ENCODE measurements at regions of chr11 and their contacts with region 1.

Region 1: DNA sequence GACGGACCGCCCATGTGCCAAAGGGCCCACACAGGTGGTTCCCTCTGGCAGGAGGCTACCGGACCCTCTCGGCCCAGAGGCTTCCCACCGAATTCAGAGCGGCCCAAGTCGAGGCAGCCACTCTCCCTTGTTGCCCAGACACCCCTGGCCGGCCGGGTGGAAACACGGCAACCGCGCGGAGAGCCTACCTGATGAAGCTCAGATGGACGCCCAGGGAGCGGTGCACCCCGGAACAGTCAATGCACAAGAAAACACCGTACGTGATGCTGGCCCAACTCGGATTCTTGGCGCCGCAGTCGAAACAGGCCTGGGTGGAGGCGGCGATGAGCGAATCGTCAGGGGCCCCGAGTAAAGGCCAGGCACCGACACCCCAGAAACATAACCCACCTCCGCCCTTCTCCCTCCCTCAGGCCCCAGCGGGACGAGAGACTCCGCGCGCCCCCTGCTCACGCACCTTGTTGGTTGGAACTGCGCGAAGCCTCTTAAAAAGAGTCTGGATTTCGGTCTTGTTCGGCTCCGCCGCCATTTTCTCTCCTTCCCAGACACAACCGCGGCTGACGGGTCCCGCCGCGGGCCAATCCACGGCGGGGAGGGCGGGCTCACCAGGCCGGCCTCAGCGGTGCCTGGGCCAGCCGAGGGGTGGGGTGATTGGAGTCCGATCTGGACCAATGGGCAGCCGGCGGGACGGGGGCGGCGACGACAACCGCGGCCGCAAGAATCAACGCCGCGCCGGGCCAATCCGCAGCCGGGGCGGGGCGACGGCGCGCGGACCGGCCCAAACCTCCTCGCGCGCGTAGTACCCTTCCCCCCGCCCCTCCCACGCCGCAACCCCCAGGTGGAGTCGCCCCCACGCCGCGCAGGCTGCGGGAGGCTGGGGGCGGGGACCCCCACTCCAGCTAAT is at the start of gene ARFGAP2:
- DNase-seq: peak; percentile 92 to 98 (median 96)
- ATAC-seq: peak; percentile 94
- H3K4me3 ChIP-seq: peak within 1 kb of the TSS; percentile 97
- H3K4me3 Mint-ChIP-seq: peak within 1 kb of the TSS; percentile 92 to 99 (median 98)
- H3K27ac ChIP-seq: peak within 1 kb of the TSS; percentile 97
- H3K27ac Mint-ChIP-seq: peak within 1 kb of the TSS; percentile 97 to 100 (median 99)
- H3K4me1 ChIP-seq: peaks cover 19 to 31% of the 10 kb centered on the region in 2 donors
- H3K4me1 Mint-ChIP-seq: peaks cover 19 to 60% (median 45%) of the 10 kb centered on the region in 7 donors
- H3K27me3 ChIP-seq: no peaks in the 10 kb centered on the region
- H3K27me3 Mint-ChIP-seq: no peaks in the 10 kb centered on the region
- total RNA-seq, gene ARFGAP2: 107 to 220 (median 155) TPM

Region 2: DNA sequence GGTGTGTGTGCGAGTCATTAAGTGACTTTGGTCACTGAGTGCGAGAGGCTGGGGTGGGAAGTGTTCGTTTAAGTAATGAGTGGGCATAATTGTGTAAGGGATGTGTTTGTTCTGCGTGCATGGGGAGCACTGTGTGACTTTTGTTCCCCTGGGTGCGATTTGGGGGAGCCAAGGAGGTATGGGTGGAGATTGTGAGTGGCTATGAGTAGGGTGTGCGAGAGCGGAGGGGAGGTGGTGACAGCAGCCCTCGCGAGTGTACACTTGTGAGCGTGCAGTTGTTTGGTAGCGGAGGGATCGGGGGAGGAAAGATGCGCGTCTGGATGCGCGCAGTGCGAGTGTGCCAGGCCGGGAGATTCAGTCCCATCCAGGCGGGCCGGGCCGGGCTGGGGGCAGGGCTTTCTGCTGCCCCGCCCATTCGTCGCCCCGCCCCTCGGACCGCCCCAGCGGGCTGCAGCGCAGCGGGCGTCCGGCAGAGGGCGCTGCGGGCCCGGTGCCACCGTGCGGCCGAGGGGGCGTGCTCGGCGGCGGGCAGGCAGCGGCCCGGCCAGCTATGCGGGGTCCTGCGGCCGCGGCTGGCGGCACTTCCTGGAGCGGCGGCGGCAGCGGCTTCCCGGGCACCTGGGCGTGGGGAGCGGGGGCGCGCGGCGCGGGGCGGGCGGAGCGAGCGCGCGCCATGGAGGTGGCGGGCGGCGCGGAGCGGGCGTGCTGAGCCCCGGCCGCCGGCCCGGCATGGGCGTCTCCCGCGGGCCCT is 829.5 kb before region 1 on chr11 and contains the start of gene DGKZ:
- CTCF ChIA-PET with region 1: no interaction called
- POLR2A ChIA-PET with region 1: no interaction called
- intact Hi-C with region 1: loop called in 1 of 2 experiments (anchors 5 kb)
- DNase-seq: peak; percentile 85 to 100 (median 96)
- ATAC-seq: peak; percentile 92
- H3K4me3 ChIP-seq: peak within 1 kb of the TSS; percentile 91
- H3K4me3 Mint-ChIP-seq: peak within 1 kb of the TSS; percentile 93 to 97 (median 95)
- H3K27ac ChIP-seq: peak within 1 kb of the TSS; percentile 83
- H3K27ac Mint-ChIP-seq: peak within 1 kb of the TSS; percentile 89 to 98 (median 94)
- H3K4me1 ChIP-seq: peaks cover 46 to 79% of the 10 kb centered on the region in 2 donors
- H3K4me1 Mint-ChIP-seq: peaks cover 61 to 85% (median 75%) of the 10 kb centered on the region in 7 donors
- H3K27me3 ChIP-seq: no peaks in the 10 kb centered on the region
- H3K27me3 Mint-ChIP-seq: peaks cover 0 to 3% (median 0%) of the 10 kb centered on the region in 5 donors
- total RNA-seq, gene DGKZ: 146 to 291 (median 263) TPM

Region 3: GRCh38 chr11:46889689-46890475 is 286.7 kb before region 1 on chr11:
- CTCF ChIA-PET with region 1: no interaction called
- POLR2A ChIA-PET with region 1: no interaction called
- intact Hi-C with region 1: loop called in 1 of 2 experiments (anchors 1 kb)
- DNase-seq: peak; percentile 40 to 80 (median 72)
- ATAC-seq: peak; percentile 95
- H3K4me3 ChIP-seq: no peak overlapping the region
- H3K4me3 Mint-ChIP-seq: no peak overlapping the region
- H3K27ac ChIP-seq: no peak overlapping the region
- H3K27ac Mint-ChIP-seq: no peak overlapping the region
- H3K4me1 ChIP-seq: no peaks in the 10 kb centered on the region
- H3K4me1 Mint-ChIP-seq: peaks cover 0 to 6% (median 0%) of the 10 kb centered on the region in 7 donors
- H3K27me3 ChIP-seq: no peaks in the 10 kb centered on the region
- H3K27me3 Mint-ChIP-seq: peaks cover 0 to 7% (median 0%) of the 10 kb centered on the region in 5 donors

Region 4: GRCh38 chr11:46951864-46952263 is 224.7 kb before region 1 on chr11:
- CTCF ChIA-PET with region 1: no interaction called
- POLR2A ChIA-PET with region 1: no interaction called
- intact Hi-C with region 1: no loop called
- DNase-seq: no peak
- ATAC-seq: no peak
- H3K4me3 ChIP-seq: no peak overlapping the region
- H3K4me3 Mint-ChIP-seq: no peak overlapping the region
- H3K27ac ChIP-seq: no peak overlapping the region
- H3K27ac Mint-ChIP-seq: peak overlapping the region in 1 of 9 donors; percentile 59
- H3K4me1 ChIP-seq: no peaks in the 10 kb centered on the region
- H3K4me1 Mint-ChIP-seq: peaks cover 6 to 16% (median 10%) of the 10 kb centered on the region in 7 donors
- H3K27me3 ChIP-seq: no peaks in the 10 kb centered on the region
- H3K27me3 Mint-ChIP-seq: no peaks in the 10 kb centered on the region

Region 5: GRCh38 chr11:47010179-47010578 is 166.4 kb before region 1 on chr11:
- CTCF ChIA-PET with region 1: no interaction called
- POLR2A ChIA-PET with region 1: no interaction called
- intact Hi-C with region 1: no loop called
- DNase-seq: no peak
- ATAC-seq: no peak
- H3K4me3 ChIP-seq: no peak overlapping the region
- H3K4me3 Mint-ChIP-seq: no peak overlapping the region
- H3K27ac ChIP-seq: no peak overlapping the region
- H3K27ac Mint-ChIP-seq: peak overlapping the region in 1 of 9 donors; percentile 26
- H3K4me1 ChIP-seq: no peaks in the 10 kb centered on the region
- H3K4me1 Mint-ChIP-seq: peaks cover 0 to 6% (median 0%) of the 10 kb centered on the region in 7 donors
- H3K27me3 ChIP-seq: no peaks in the 10 kb centered on the region
- H3K27me3 Mint-ChIP-seq: no peaks in the 10 kb centered on the region

Region 6: GRCh38 chr11:47078751-47079521 is 97.6 kb before region 1 on chr11:
- CTCF ChIA-PET with region 1: no interaction called
- POLR2A ChIA-PET with region 1: no interaction called
- intact Hi-C with region 1: no loop called
- DNase-seq: no peak
- ATAC-seq: no peak
- H3K4me3 ChIP-seq: no peak overlapping the region
- H3K4me3 Mint-ChIP-seq: no peak overlapping the region
- H3K27ac ChIP-seq: no peak overlapping the region
- H3K27ac Mint-ChIP-seq: no peak overlapping the region
- H3K4me1 ChIP-seq: no peaks in the 10 kb centered on the region
- H3K4me1 Mint-ChIP-seq: peaks cover 0 to 2% (median 0%) of the 10 kb centered on the region in 7 donors
- H3K27me3 ChIP-seq: no peaks in the 10 kb centered on the region
- H3K27me3 Mint-ChIP-seq: peaks cover 0 to 3% (median 0%) of the 10 kb centered on the region in 5 donors

Region 7: DNA sequence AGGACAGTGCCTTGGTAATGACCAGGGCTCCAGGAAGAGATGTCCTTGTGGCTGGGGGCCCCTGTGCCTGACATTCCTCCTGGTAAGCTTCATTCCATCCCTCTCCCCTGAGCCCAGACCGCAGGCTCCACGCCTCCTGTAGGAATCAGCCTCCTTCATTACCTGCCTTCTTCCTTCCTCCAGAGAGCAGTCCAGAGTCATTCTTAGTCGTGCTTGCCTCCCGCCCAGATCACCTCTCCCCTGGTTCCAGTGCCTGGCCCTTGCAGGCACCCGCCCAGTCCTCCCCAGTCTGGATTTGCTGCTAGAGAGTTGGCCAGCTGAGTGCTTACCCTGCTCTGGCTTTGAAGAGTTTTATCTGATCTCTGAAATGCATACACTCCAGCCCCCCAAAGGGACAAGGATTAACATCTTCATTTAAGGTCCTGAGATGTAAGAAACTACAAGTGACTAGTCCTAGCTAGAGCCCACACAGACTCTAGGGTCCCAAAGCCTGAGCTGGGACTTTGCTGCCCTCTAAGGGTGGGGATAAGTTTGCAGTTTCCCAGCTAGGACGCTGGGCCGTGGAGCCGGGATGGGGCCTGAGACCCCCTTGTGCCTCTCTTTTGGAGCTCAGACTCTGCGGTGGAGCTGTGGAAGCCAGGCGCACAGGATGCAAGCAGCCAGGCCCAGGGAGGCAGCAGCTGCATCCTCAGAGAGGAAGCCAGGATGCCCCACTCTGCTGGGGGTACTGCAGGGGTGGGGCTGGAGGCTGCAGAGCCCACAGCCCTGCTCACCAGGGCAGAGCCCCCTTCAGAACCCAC is 82.8 kb after region 1 on chr11:
- CTCF ChIA-PET with region 1: interaction called, 15 read pairs
- POLR2A ChIA-PET with region 1: interaction called, 9 read pairs
- intact Hi-C with region 1: loop called in 1 of 2 experiments (anchors 1 kb)
- DNase-seq: peak in 5 of 9 donors; percentile 23 to 42 (median 29)
- ATAC-seq: peak; percentile 80
- H3K4me3 ChIP-seq: no peak overlapping the region
- H3K4me3 Mint-ChIP-seq: no peak overlapping the region
- H3K27ac ChIP-seq: no peak overlapping the region
- H3K27ac Mint-ChIP-seq: peak overlapping the region in 1 of 9 donors; percentile 76
- H3K4me1 ChIP-seq: peaks cover 0 to 11% of the 10 kb centered on the region in 2 donors
- H3K4me1 Mint-ChIP-seq: peaks cover 11 to 28% (median 18%) of the 10 kb centered on the region in 7 donors
- H3K27me3 ChIP-seq: no peaks in the 10 kb centered on the region
- H3K27me3 Mint-ChIP-seq: no peaks in the 10 kb centered on the region

Region 8: DNA sequence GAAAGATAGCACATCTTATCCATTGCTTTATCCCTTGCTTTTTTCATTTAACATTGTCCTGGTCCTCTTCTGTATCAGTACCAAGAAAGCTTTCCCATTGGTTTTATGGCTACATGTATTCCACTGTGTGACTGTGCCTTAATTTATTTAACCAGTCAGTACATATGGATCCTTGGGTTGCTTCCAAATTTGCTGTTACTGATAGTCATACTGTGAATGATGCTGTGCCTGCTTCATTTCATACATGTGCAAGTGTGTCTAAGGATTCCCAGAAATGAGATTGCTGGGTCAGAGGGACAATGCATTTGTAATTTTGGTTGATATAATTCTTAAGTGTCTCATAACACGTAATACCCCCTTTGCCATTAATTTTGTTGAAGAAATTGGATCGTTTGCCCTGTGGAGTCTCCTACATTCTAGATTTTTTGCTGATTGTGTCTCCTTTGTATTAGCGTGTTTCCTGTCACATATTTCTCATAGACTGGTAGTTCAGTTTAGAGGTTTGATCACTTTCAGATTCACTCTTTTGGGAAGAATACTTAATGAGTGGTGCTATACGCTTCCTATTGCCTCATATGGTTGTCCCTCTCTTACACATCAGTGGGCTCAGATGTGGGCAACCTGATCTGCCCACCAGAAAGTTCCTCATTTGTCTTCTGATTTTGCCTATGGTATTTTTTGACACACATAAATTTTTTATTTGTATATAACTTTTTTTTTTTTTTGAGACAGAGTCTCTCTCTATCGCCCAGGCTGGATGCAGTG is 140.7 kb after region 1 on chr11:
- CTCF ChIA-PET with region 1: no interaction called
- POLR2A ChIA-PET with region 1: no interaction called
- intact Hi-C with region 1: no loop called
- DNase-seq: no peak
- ATAC-seq: no peak
- H3K4me3 ChIP-seq: no peak overlapping the region
- H3K4me3 Mint-ChIP-seq: no peak overlapping the region
- H3K27ac ChIP-seq: no peak overlapping the region
- H3K27ac Mint-ChIP-seq: peak overlapping the region in 2 of 9 donors; percentile 33 to 60
- H3K4me1 ChIP-seq: no peaks in the 10 kb centered on the region
- H3K4me1 Mint-ChIP-seq: peaks cover 0 to 7% (median 0%) of the 10 kb centered on the region in 7 donors
- H3K27me3 ChIP-seq: no peaks in the 10 kb centered on the region
- H3K27me3 Mint-ChIP-seq: no peaks in the 10 kb centered on the region

Region 9: DNA sequence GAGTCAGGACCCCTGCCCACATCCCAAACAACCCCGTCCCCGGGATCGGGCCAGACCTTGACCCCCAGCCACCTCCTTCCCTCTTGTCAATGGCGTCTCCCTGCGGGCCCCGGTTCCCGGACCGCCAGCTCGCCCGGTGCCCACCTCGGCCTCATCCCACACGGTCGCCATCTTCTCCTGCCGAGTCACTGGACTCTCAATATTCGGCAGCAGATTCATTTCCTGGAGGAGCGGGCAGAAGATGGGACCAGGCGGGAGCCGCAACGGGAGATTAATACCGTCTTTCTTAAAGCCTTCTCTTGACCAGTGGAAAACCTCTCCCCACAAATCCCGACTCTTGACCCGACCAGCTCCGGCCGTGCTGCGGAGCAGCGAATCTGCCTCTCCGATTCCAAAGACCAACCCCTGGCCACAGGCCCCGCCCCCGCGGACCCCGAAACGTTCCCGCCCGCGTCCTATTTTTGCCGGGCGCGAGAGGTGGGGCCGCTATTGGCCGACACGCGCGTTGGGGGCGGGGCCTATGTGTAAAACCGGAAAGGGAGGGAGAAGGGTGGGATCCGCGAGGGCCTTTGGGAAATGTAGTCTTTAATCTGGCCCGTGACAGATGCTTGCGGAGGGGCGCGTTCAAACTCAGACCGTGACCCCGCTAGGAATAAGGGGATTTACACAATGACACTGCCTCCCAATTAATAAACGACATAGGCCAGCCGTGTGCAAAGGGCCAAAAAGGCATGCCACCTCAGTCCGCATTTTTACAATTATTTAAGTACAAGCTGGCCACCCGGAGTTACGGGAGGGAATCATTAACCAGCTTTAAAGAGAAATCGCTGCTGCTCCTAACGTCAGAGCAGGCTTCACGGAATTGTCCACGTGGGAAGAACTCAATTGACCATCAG is 249.7 kb after region 1 on chr11 and contains the start of gene PSMC3:
- CTCF ChIA-PET with region 1: no interaction called
- POLR2A ChIA-PET with region 1: no interaction called
- intact Hi-C with region 1: loop called (anchors 1 kb)
- DNase-seq: peak; percentile 92 to 99 (median 95)
- ATAC-seq: peak; percentile 98
- H3K4me3 ChIP-seq: peak within 1 kb of the TSS; percentile 95
- H3K4me3 Mint-ChIP-seq: peak within 1 kb of the TSS; percentile 91 to 99 (median 98)
- H3K27ac ChIP-seq: peak within 1 kb of the TSS; percentile 96
- H3K27ac Mint-ChIP-seq: peak within 1 kb of the TSS; percentile 93 to 99 (median 97)
- H3K4me1 ChIP-seq: peaks cover 9 to 10% of the 10 kb centered on the region in 2 donors
- H3K4me1 Mint-ChIP-seq: peaks cover 16 to 32% (median 27%) of the 10 kb centered on the region in 7 donors
- H3K27me3 ChIP-seq: no peaks in the 10 kb centered on the region
- H3K27me3 Mint-ChIP-seq: no peaks in the 10 kb centered on the region
- total RNA-seq, gene PSMC3: 42.2 to 149 (median 51.3) TPM

Region 10: DNA sequence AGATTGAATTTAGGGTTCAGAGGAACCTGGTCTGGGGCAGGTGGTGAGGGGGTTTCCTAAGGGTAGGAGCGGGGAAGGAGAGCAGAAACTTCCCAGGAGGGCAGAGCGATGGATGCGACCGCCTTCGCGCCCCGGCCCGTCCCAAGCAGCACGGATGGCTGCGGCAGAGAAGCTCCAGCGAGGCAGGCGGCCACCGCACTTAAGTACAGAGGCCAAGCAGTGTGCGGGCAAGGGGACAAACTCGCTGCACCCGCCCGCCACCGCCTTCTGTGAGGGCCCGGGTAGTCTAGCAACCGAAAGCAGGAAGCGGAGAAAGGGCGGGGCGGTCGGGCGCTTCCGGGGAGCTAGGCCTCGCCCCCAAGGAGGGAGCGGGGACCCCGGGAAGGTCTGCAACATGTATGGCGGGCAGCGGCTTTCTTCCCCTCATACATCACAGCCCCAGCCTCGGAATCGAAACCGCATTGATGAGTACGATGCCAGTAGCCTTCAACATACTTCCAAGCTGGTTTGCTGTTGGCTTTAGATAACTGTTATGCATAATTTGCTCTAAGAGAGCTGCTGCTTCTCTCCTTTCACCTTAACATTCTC is 538.6 kb after region 1 on chr11 and contains the start of gene AGBL2:
- CTCF ChIA-PET with region 1: no interaction called
- POLR2A ChIA-PET with region 1: no interaction called
- intact Hi-C with region 1: loop called in 1 of 2 experiments (anchors 5 kb)
- DNase-seq: peak; percentile 61 to 85 (median 82)
- ATAC-seq: peak; percentile 99
- H3K4me3 ChIP-seq: peak within 1 kb of the TSS; percentile 94
- H3K4me3 Mint-ChIP-seq: peak within 1 kb of the TSS; percentile 95 to 99 (median 97)
- H3K27ac ChIP-seq: peak within 1 kb of the TSS; percentile 84
- H3K27ac Mint-ChIP-seq: peak within 1 kb of the TSS; percentile 96 to 99 (median 98)
- H3K4me1 ChIP-seq: peaks cover 7 to 15% of the 10 kb centered on the region in 2 donors
- H3K4me1 Mint-ChIP-seq: peaks cover 0 to 22% (median 15%) of the 10 kb centered on the region in 7 donors
- H3K27me3 ChIP-seq: no peaks in the 10 kb centered on the region
- H3K27me3 Mint-ChIP-seq: no peaks in the 10 kb centered on the region
- total RNA-seq, gene AGBL2: 4.7 to 11.3 (median 8.1) TPM

Measured in naive thymus-derived CD4-positive, alpha-beta T cell (primary cell).